ENCODE measurements at regions of chr7 and their contacts with region 1.

Region 1: GRCh38 chr7:6158424-6159096 is 113.9 kb downstream of the CYTH3 start:
- DNase-seq: peak; percentile 60
- ATAC-seq: no peak
- H3K4me3 ChIP-seq: no peak overlapping the region
- H3K27ac ChIP-seq: no peak overlapping the region
- H3K4me1 ChIP-seq: no peaks in the 10 kb centered on the region
- H3K27me3 ChIP-seq: no peaks in the 10 kb centered on the region
- CTCF ChIP-seq: no peak

Region 2: DNA sequence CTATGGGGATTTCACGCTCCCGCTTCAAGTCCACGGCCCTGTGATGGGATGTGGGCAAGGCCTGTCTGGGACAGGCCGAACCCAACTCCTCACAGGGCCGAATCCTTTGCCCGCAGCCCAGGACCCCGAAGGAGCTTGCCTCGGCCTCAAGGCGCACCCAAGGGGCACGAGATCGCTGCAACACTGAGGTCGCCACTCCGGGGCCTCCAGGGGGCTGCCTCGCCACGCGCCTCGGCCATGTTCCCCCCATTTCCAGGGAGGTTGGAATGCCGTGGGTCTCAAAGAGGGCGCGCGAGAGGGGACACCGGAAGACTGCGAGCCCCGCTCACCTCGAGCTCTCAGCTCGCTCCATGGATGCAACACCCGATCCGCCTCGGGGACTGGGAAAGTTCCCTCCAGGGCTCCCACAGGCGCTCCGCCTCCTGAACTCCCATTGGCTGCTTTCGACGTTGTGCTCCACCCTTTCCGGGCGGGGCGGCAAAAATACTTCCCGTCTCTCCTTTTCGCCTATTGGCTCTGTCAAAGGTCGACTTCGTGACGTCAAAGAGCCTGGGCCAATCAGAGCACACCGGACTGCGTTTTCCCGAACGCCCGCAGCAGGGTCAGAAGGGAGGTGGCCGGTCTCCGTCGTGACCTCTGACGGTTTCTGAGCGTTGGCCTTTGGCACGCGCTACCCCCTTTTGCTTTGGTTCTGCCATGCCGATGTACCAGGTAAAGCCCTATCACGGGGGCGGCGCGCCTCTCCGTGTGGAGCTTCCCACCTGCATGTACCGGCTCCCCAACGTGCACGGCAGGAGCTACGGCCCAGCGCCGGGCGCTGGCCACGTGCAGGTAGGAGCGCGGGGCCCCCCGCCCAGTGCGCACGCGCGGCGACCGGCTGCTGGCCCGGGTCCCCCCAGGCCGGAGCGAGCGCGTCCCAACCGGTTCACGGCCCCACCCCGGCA is 149.6 kb before region 1 on chr7 and contains the starts of genes AIMP2 and PMS2:
- intact Hi-C with region 1: no loop called
- DNase-seq: peak; percentile 98
- ATAC-seq: peak; percentile 96
- H3K4me3 ChIP-seq: peak within 1 kb of the TSS; percentile 81
- H3K27ac ChIP-seq: peak within 1 kb of the TSS; percentile 90
- H3K4me1 ChIP-seq: peaks cover 33% of the 10 kb centered on the region
- H3K27me3 ChIP-seq: no peaks in the 10 kb centered on the region
- CTCF ChIP-seq: no peak
- total RNA-seq, gene AIMP2: 20.3 TPM
- total RNA-seq, gene PMS2: 12.5 TPM

Region 3: GRCh38 chr7:6323967-6324701 is 165.6 kb after region 1 on chr7:
- intact Hi-C with region 1: loop called (anchors 5 kb)
- DNase-seq: no peak
- ATAC-seq: no peak
- H3K4me3 ChIP-seq: no peak overlapping the region
- H3K27ac ChIP-seq: no peak overlapping the region
- H3K4me1 ChIP-seq: no peaks in the 10 kb centered on the region
- H3K27me3 ChIP-seq: no peaks in the 10 kb centered on the region
- CTCF ChIP-seq: no peak

Region 4: GRCh38 chr7:6516387-6516983 is 357.9 kb after region 1 on chr7:
- intact Hi-C with region 1: no loop called
- DNase-seq: peak; percentile 88
- ATAC-seq: peak; percentile 92
- H3K4me3 ChIP-seq: peak overlapping the region; percentile 10
- H3K27ac ChIP-seq: no peak overlapping the region
- H3K4me1 ChIP-seq: no peaks in the 10 kb centered on the region
- H3K27me3 ChIP-seq: peaks cover 14% of the 10 kb centered on the region
- CTCF ChIP-seq: peak; percentile 91